ENCODE measurements at regions of chr16 and their contacts with region 1.

Region 1: GRCh38 chr16:67846320-67847063 is at the start of gene NUTF2:
- DNase-seq: peak; percentile 99
- H3K4me3 ChIP-seq: peak within 1 kb of the TSS; percentile 98
- H3K4me3 Mint-ChIP-seq: peak within 1 kb of the TSS; percentile 75
- H3K27ac Mint-ChIP-seq: peak within 1 kb of the TSS; percentile 93
- H3K4me1 ChIP-seq: peaks cover 33% of the 10 kb centered on the region
- H3K4me1 Mint-ChIP-seq: peaks cover 17% of the 10 kb centered on the region
- H3K27me3 ChIP-seq: no peaks in the 10 kb centered on the region
- H3K27me3 Mint-ChIP-seq: no peaks in the 10 kb centered on the region
- CTCF ChIP-seq: no peak
- total RNA-seq, gene NUTF2: 239 and 245 TPM in 2 replicates

Region 2: GRCh38 chr16:67736858-67737257 is 109.6 kb before region 1 on chr16:
- CTCF ChIA-PET with region 1: no interaction called
- POLR2A ChIA-PET with region 1: no interaction called
- intact Hi-C with region 1: no loop called
- DNase-seq: no peak
- H3K4me3 ChIP-seq: no peak overlapping the region
- H3K4me3 Mint-ChIP-seq: no peak overlapping the region
- H3K27ac Mint-ChIP-seq: no peak overlapping the region
- H3K4me1 ChIP-seq: no peaks in the 10 kb centered on the region
- H3K4me1 Mint-ChIP-seq: no peaks in the 10 kb centered on the region
- H3K27me3 ChIP-seq: no peaks in the 10 kb centered on the region
- H3K27me3 Mint-ChIP-seq: no peaks in the 10 kb centered on the region
- CTCF ChIP-seq: no peak

Region 3: GRCh38 chr16:67806428-67807147 is 39.9 kb before region 1 on chr16 and contains the starts of genes RANBP10 and TSNAXIP1:
- CTCF ChIA-PET with region 1: interaction called, 5 read pairs
- POLR2A ChIA-PET with region 1: interaction called, 9 read pairs
- intact Hi-C with region 1: loop called (anchors 2 kb)
- DNase-seq: peak; percentile 99
- H3K4me3 ChIP-seq: peak within 1 kb of the TSS; percentile 88
- H3K4me3 Mint-ChIP-seq: peak within 1 kb of the TSS; percentile 83
- H3K27ac Mint-ChIP-seq: peak within 1 kb of the TSS; percentile 81
- H3K4me1 ChIP-seq: peaks cover 10% of the 10 kb centered on the region; the same call in 1 of the 2 replicates
- H3K4me1 Mint-ChIP-seq: peaks cover 9% of the 10 kb centered on the region
- H3K27me3 ChIP-seq: no peaks in the 10 kb centered on the region
- H3K27me3 Mint-ChIP-seq: no peaks in the 10 kb centered on the region
- CTCF ChIP-seq: no peak
- total RNA-seq, gene RANBP10: 21.8 and 23.8 TPM in 2 replicates
- total RNA-seq, gene TSNAXIP1: 0.84 and 0.91 TPM in 2 replicates

Region 4: GRCh38 chr16:67857502-67858233 is 11.2 kb after region 1 on chr16:
- CTCF ChIA-PET with region 1: interaction called, 3 read pairs
- POLR2A ChIA-PET with region 1: interaction called, 4 read pairs
- intact Hi-C with region 1: loop called (anchors 1 kb)
- DNase-seq: peak; percentile 86 to 91
- H3K4me3 ChIP-seq: no peak overlapping the region
- H3K4me3 Mint-ChIP-seq: peak overlapping the region; percentile 22
- H3K27ac Mint-ChIP-seq: peak overlapping the region; percentile 90
- H3K4me1 ChIP-seq: peaks cover 21% of the 10 kb centered on the region
- H3K4me1 Mint-ChIP-seq: peaks cover 31% of the 10 kb centered on the region
- H3K27me3 ChIP-seq: no peaks in the 10 kb centered on the region
- H3K27me3 Mint-ChIP-seq: no peaks in the 10 kb centered on the region
- CTCF ChIP-seq: no peak

Region 5: GRCh38 chr16:67865316-67865715 is 18.8 kb after region 1 on chr16:
- CTCF ChIA-PET with region 1: interaction called, 12 read pairs
- POLR2A ChIA-PET with region 1: interaction called, 9 read pairs
- intact Hi-C with region 1: loop called (anchors 2 kb)
- DNase-seq: peak; percentile 59 to 72
- H3K4me3 ChIP-seq: no peak overlapping the region
- H3K4me3 Mint-ChIP-seq: no peak overlapping the region
- H3K27ac Mint-ChIP-seq: no peak overlapping the region
- H3K4me1 ChIP-seq: no peaks in the 10 kb centered on the region
- H3K4me1 Mint-ChIP-seq: no peaks in the 10 kb centered on the region
- H3K27me3 ChIP-seq: no peaks in the 10 kb centered on the region
- H3K27me3 Mint-ChIP-seq: no peaks in the 10 kb centered on the region
- CTCF ChIP-seq: peak; percentile 57 to 83

Region 6: GRCh38 chr16:67872786-67873537 is 26.5 kb after region 1 on chr16 and contains the start of gene EDC4:
- CTCF ChIA-PET with region 1: no interaction called
- POLR2A ChIA-PET with region 1: interaction called, 4 read pairs
- intact Hi-C with region 1: loop called (anchors 2 kb)
- DNase-seq: peak; percentile 87 to 91
- H3K4me3 ChIP-seq: peak within 1 kb of the TSS; percentile 93
- H3K4me3 Mint-ChIP-seq: peak within 1 kb of the TSS; percentile 90
- H3K27ac Mint-ChIP-seq: peak within 1 kb of the TSS; percentile 87
- H3K4me1 ChIP-seq: peaks cover 7% of the 10 kb centered on the region; the same call in 1 of the 2 replicates
- H3K4me1 Mint-ChIP-seq: peaks cover 20% of the 10 kb centered on the region
- H3K27me3 ChIP-seq: no peaks in the 10 kb centered on the region
- H3K27me3 Mint-ChIP-seq: no peaks in the 10 kb centered on the region
- CTCF ChIP-seq: no peak
- total RNA-seq, gene EDC4: 124 and 139 TPM in 2 replicates

Region 7: DNA sequence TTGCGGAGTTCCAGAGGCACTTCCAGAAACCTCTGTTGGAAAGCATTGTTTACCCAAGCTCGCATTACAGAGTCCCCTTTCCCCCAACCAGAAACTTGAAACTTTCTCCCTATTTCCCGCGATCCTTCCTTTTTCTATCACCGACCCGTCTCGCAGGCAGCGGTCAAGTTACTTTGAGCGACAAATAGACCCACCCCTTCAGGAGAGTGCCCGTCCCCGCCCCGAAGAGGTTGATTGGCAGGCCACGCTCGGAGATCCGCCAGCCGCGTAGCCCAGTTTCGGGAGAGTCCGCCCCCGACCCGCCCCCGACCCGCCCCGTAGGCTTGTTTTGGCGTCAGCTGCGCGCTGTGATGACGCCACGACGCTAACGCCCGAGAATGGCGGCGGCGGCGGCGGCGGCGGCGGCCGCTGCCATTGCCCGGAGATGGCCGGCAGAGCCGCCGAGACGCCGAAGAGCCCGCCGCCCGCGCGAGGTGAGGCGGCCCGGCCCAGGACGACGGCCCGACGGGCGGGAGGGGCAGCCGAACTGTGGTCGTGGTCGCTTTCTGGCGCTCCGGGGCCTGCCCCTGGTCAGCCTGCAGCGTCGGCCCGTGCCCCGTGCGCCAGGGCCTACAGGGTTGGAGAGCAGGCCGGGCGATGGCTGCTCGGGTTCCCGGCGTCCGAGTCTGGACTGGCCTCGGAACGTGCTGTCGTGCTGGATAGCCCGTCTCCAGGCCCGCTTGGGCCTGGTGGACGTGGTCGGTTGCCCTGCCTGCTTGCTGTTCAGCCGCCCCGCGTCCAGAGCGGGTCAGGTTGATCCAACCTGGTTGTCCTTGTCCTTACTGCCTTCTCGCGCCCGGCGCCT is 46.6 kb after region 1 on chr16 and contains the start of gene PSKH1:
- CTCF ChIA-PET with region 1: no interaction called
- POLR2A ChIA-PET with region 1: no interaction called
- intact Hi-C with region 1: loop called (anchors 1 kb)
- DNase-seq: peak; percentile 98
- H3K4me3 ChIP-seq: peak within 1 kb of the TSS; percentile 99
- H3K4me3 Mint-ChIP-seq: peak within 1 kb of the TSS; percentile 89
- H3K27ac Mint-ChIP-seq: peak within 1 kb of the TSS; percentile 97
- H3K4me1 ChIP-seq: peaks cover 17% of the 10 kb centered on the region; the same call in 1 of the 2 replicates
- H3K4me1 Mint-ChIP-seq: peaks cover 14% of the 10 kb centered on the region
- H3K27me3 ChIP-seq: no peaks in the 10 kb centered on the region
- H3K27me3 Mint-ChIP-seq: no peaks in the 10 kb centered on the region
- CTCF ChIP-seq: no peak
- total RNA-seq, gene PSKH1: 35.1 and 41.3 TPM in 2 replicates

Measured in Caco-2 (cell line).